ENCODE measurements at regions of chr13 and their contacts with region 1.

Region 1: GRCh38 chr13:39144941-39145533 is 106.8 kb downstream of the NHLRC3 start:
- DNase-seq: peak; percentile 65
- H3K4me3 ChIP-seq: no peak overlapping the region
- H3K27ac ChIP-seq: no peak overlapping the region
- H3K4me1 ChIP-seq: no peaks in the 10 kb centered on the region
- H3K27me3 ChIP-seq: peaks cover 13 to 24% of the 10 kb centered on the region in 2 experiments
- CTCF ChIP-seq: peak; percentile 63 to 79
- POLR2A ChIP-seq: no peak

Region 2: GRCh38 chr13:39091586-39091985 is 53.5 kb before region 1 on chr13:
- CTCF ChIA-PET with region 1: no interaction called
- POLR2A ChIA-PET with region 1: no interaction called
- dilution Hi-C with region 1: no loop called
- intact Hi-C with region 1: no loop called
- DNase-seq: no peak
- H3K4me3 ChIP-seq: no peak overlapping the region
- H3K27ac ChIP-seq: no peak overlapping the region
- H3K4me1 ChIP-seq: no peaks in the 10 kb centered on the region
- H3K27me3 ChIP-seq: peaks cover 4% of the 10 kb centered on the region in 2 experiments
- CTCF ChIP-seq: no peak
- POLR2A ChIP-seq: no peak

Region 3: GRCh38 chr13:39263033-39263432 is 118.0 kb after region 1 on chr13:
- CTCF ChIA-PET with region 1: interaction called, 17 read pairs
- POLR2A ChIA-PET with region 1: no interaction called
- dilution Hi-C with region 1: no loop called
- intact Hi-C with region 1: loop called (anchors 1 kb)
- DNase-seq: peak; percentile 71
- H3K4me3 ChIP-seq: no peak overlapping the region
- H3K27ac ChIP-seq: no peak overlapping the region
- H3K4me1 ChIP-seq: no peaks in the 10 kb centered on the region
- H3K27me3 ChIP-seq: peaks cover 2 to 11% of the 10 kb centered on the region in 2 experiments
- CTCF ChIP-seq: peak; percentile 48
- POLR2A ChIP-seq: no peak

Region 4: DNA sequence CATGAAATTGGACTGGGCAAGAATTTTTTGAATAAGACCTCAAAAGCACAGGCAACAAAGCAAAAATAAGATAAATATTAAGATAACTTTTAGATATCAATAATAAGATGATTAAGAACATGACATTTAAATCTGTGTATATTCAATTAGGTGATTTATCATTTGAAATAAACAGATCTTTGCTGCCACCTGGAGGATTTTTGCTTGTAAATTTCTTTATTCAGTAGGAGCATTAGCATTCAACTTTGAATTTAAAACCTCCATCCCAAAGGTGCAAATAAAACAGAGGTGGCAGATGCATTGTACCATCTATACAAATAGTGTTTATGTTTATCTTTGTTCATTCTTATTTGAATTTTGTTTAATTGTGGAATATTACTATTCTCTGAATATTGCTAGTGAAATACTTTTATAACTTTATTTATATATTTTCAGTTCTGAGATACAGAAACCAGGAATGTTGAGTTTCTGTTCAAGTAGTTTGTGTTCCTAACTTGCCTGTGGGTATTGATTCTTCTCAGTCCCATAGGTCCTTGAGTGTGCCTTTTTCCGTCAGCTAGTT is 531.4 kb after region 1 on chr13:
- CTCF ChIA-PET with region 1: interaction called, 4 read pairs
- POLR2A ChIA-PET with region 1: no interaction called
- dilution Hi-C with region 1: no loop called
- intact Hi-C with region 1: loop called (anchors 2 kb)
- DNase-seq: peak; percentile 55
- H3K4me3 ChIP-seq: no peak overlapping the region
- H3K27ac ChIP-seq: no peak overlapping the region
- H3K4me1 ChIP-seq: no peaks in the 10 kb centered on the region
- H3K27me3 ChIP-seq: no peaks in the 10 kb centered on the region
- CTCF ChIP-seq: peak in 1 of 2 donors; percentile 26
- POLR2A ChIP-seq: no peak

Region 5: GRCh38 chr13:39847336-39847735 is 702.3 kb after region 1 on chr13:
- CTCF ChIA-PET with region 1: no interaction called
- POLR2A ChIA-PET with region 1: no interaction called
- dilution Hi-C with region 1: no loop called
- intact Hi-C with region 1: no loop called
- DNase-seq: no peak
- H3K4me3 ChIP-seq: no peak overlapping the region
- H3K27ac ChIP-seq: no peak overlapping the region
- H3K4me1 ChIP-seq: no peaks in the 10 kb centered on the region
- H3K27me3 ChIP-seq: no peaks in the 10 kb centered on the region
- CTCF ChIP-seq: no peak
- POLR2A ChIP-seq: no peak